Mammary epithelial cell (primary cell): ENCODE measurements at regions of chr12 and their contacts with region 1.

Region 1: GRCh38 chr12:14836302-14837210 is 6.8 kb downstream of the ART4 start:
- DNase-seq: peak; percentile 84
- H3K4me3 ChIP-seq: no peak overlapping the region
- H3K27ac ChIP-seq: peak overlapping the region; percentile 73
- H3K4me1 ChIP-seq: peaks cover 18% of the 10 kb centered on the region
- H3K27me3 ChIP-seq: no peaks in the 10 kb centered on the region
- CTCF ChIP-seq: no peak

Region 2: DNA sequence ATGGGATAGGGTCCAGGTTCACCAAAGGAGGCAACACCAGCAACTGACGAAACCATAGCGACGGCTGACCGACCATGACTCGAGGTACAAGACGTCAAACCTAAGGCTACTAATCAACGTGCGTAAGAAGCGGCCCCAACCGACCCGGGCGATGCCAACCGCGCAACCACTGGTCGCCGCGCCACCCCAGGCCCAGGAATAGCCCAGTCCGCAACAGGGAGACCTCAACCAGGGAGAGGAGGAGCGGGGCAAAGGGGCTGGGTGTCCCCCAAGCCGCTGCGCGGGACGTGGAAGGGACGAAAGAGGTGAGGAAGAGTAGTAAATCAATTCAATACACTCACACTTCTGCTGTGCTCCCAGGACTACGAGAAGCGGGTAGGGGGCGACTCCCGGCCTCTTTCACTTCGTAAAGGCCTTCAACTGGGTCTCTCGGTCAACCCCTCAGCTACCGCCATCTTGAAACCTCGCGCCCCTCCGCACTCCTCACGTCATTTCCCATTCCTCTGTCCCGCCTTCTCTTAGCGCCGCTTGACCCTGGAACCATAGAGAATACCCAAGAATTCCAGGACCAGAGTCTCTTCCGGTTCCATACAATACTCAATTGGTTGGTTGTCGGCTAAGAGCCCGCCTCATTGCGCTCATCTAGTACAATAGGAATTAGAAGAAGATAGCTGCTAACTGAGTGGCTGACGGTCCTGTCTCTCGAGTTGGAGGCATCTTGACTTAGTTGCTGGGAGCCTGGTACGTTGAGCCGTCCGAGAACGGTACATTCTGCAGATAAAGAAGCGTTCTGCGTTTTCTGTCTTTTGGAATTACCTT is 33.3 kb before region 1 on chr12 and contains the starts of genes C12orf60 and WBP11:
- CTCF ChIA-PET with region 1: no interaction called
- dilution Hi-C with region 1: no loop called
- in situ Hi-C with region 1: no loop called
- intact Hi-C with region 1: loop called (anchors 5 kb)
- DNase-seq: peak; percentile 99
- H3K4me3 ChIP-seq: peak within 1 kb of the TSS; percentile 70 to 100 (median 99)
- H3K27ac ChIP-seq: peak within 1 kb of the TSS; percentile 99
- H3K4me1 ChIP-seq: peaks cover 14% of the 10 kb centered on the region
- H3K27me3 ChIP-seq: no peaks in the 10 kb centered on the region
- CTCF ChIP-seq: no peak
- total RNA-seq, gene C12orf60: 0.83 to 1.3 TPM
- total RNA-seq, gene WBP11: 12.0 to 61.2 TPM